ENCODE measurements at regions of chr11 and their contacts with region 1.

Region 1: GRCh38 chr11:112961146-112961668 is at the start of gene NCAM1:
- DNase-seq: peak; percentile 82 to 92 (median 88)
- ATAC-seq: peak; percentile 71 to 84 (median 75)
- H3K4me3 ChIP-seq: peak within 1 kb of the TSS; percentile 55 to 93 (median 68)
- H3K27ac ChIP-seq: peak within 1 kb of the TSS; percentile 52 to 90 (median 81)
- H3K4me1 ChIP-seq: peaks cover 0 to 39% (median 9%) of the 10 kb centered on the region in 12 donors
- H3K27me3 ChIP-seq: peaks cover 0 to 71% (median 8%) of the 10 kb centered on the region in 9 donors
- CTCF ChIP-seq: no peak
- POLR2A ChIP-seq: no peak
- total RNA-seq, gene NCAM1: 190 to 753 (median 398) TPM

Region 2: DNA sequence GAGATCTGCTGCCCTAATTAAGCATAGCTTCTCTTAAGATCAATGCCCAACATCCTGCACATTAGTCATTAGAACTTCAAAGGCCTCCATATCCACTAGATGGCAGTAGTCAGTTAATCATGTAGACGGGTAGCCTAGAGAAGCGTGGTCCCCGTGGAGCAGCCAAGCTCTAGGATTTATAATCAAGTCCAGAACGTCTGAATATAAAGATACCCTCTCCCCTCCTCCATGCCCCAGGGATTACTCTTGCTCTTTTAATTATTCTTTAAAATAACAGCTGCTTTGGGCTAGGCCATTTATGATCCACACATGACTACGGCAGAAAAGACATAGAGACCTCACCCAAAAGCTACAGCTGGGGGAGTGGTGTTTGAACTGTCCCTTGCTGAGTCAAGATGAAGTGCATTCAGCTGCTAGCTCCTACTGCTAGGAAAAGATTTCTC is 372.9 kb before region 1 on chr11:
- intact Hi-C with region 1: loop called in 5 of 10 experiments (anchors 10 kb)
- DNase-seq: peak; percentile 57 to 76 (median 66)
- ATAC-seq: peak; percentile 58 to 88 (median 82)
- H3K4me3 ChIP-seq: no peak overlapping the region
- H3K27ac ChIP-seq: peak overlapping the region in 1 of 12 donors; percentile 44
- H3K4me1 ChIP-seq: peaks cover 0 to 6% (median 1%) of the 10 kb centered on the region in 12 donors
- H3K27me3 ChIP-seq: no peaks in the 10 kb centered on the region
- CTCF ChIP-seq: peak; percentile 64 to 86 (median 74)
- POLR2A ChIP-seq: no peak

Region 3: GRCh38 chr11:112784323-112785073 is 176.7 kb before region 1 on chr11:
- intact Hi-C with region 1: loop called in 2 of 10 experiments (anchors 5 to 10 kb)
- DNase-seq: peak; percentile 68 to 91 (median 85)
- ATAC-seq: peak; percentile 63 to 83 (median 73)
- H3K4me3 ChIP-seq: peak overlapping the region in 9 of 12 donors; percentile 1 to 40 (median 27)
- H3K27ac ChIP-seq: peak overlapping the region; percentile 7 to 75 (median 56)
- H3K4me1 ChIP-seq: peaks cover 0 to 56% (median 34%) of the 10 kb centered on the region in 12 donors
- H3K27me3 ChIP-seq: no peaks in the 10 kb centered on the region
- CTCF ChIP-seq: peak in 2 of 12 donors; percentile 12 to 15
- POLR2A ChIP-seq: no peak

Region 4: DNA sequence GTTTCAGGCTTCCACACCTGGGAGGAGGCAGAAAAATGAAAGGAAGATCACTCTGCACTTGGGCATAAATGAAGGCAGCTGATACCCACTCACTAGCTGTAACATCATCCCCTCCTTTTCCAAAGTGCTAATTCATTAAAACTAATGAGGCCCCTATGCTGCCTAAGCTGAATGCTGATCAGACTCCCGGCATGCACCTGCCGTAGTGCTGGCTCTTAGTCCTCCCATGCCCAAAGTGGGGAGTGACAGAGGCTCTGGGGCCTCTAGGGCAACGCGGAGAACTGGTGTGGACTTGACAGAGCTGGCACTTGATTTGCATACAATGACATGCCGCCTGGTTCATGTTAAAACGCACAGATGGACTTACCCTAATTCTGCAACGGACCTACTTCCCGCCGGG is 96.5 kb before region 1 on chr11:
- intact Hi-C with region 1: loop called in 2 of 10 experiments (anchors 5 kb)
- DNase-seq: peak in 3 of 5 donors; percentile 22 to 32 (median 32)
- ATAC-seq: peak; percentile 62 to 80 (median 74)
- H3K4me3 ChIP-seq: no peak overlapping the region
- H3K27ac ChIP-seq: peak overlapping the region in 4 of 12 donors; percentile 42 to 77 (median 60)
- H3K4me1 ChIP-seq: peaks cover 0 to 20% (median 0%) of the 10 kb centered on the region in 12 donors
- H3K27me3 ChIP-seq: no peaks in the 10 kb centered on the region
- CTCF ChIP-seq: no peak
- POLR2A ChIP-seq: no peak

Region 5: GRCh38 chr11:113113801-113114706 is 152.8 kb after region 1 on chr11:
- intact Hi-C with region 1: loop called in 8 of 10 experiments (anchors 5 to 10 kb)
- DNase-seq: peak; percentile 49 to 67 (median 64)
- ATAC-seq: peak; percentile 89 to 94 (median 91)
- H3K4me3 ChIP-seq: no peak overlapping the region
- H3K27ac ChIP-seq: peak overlapping the region in 9 of 12 donors; percentile 41 to 79 (median 62)
- H3K4me1 ChIP-seq: peaks cover 0 to 58% (median 21%) of the 10 kb centered on the region in 12 donors
- H3K27me3 ChIP-seq: no peaks in the 10 kb centered on the region
- CTCF ChIP-seq: peak; percentile 32 to 77 (median 65)
- POLR2A ChIP-seq: no peak

Region 6: GRCh38 chr11:113261709-113262475 is 300.7 kb after region 1 on chr11:
- intact Hi-C with region 1: loop called in 3 of 10 experiments (anchors 10 kb)
- DNase-seq: peak in 1 of 5 donors; percentile 42
- ATAC-seq: peak in 3 of 4 donors; percentile 71 to 79 (median 71)
- H3K4me3 ChIP-seq: no peak overlapping the region
- H3K27ac ChIP-seq: peak overlapping the region in 4 of 12 donors; percentile 1 to 37 (median 20)
- H3K4me1 ChIP-seq: peaks cover 0 to 23% (median 4%) of the 10 kb centered on the region in 12 donors
- H3K27me3 ChIP-seq: no peaks in the 10 kb centered on the region
- CTCF ChIP-seq: no peak
- POLR2A ChIP-seq: no peak

Measured in heart left ventricle (tissue), 16 donors.